Activated T-helper 1 cell treated with anti-CD3 and anti-CD28 coated beads, Interleukin-12 subunit alpha, Interleukin-12 subunit beta, Interleukin-2, Interleukin-4 antibody, amounts not matched to agents 30 ng/mL and 10 ng/mL and 1 ng/mL, durations not matched to agents 14 hours and 24 hours and 36 hours (primary cell): ENCODE measurements at regions of chr12 and their contacts with region 1.

Region 1: GRCh38 chr12:9049520-9050133 is 60.3 kb downstream of the KLRG1 start:
- DNase-seq: no peak
- H3K4me3 Mint-ChIP-seq: no peak overlapping the region
- H3K27ac Mint-ChIP-seq: no peak overlapping the region
- H3K4me1 Mint-ChIP-seq: no peaks in the 10 kb centered on the region
- H3K27me3 Mint-ChIP-seq: peaks cover 18% of the 10 kb centered on the region

Region 2: DNA sequence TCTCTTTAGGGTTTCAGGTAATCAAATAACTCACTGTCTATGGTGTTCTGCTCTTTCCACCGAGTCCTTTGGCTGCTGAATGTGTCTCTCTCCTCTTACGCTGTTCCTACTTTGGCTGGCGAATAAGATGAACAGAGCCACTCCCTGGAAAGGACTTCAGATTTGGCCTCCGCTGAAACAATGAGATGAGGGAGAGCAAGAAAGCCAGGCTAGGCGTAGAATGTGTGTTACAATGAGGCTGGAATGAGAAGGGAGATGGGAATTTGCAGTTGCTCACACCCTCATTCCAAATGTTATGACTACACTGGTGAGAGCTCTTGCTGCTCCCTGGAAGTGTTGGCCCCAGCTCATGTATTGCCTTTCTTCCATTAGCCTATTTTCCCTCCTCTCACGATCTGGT is 387.0 kb before region 1 on chr12 and contains the start of gene MFAP5:
- intact Hi-C with region 1: loop called (anchors 1 kb)
- DNase-seq: no peak
- H3K4me3 Mint-ChIP-seq: no peak within 1 kb of the TSS
- H3K27ac Mint-ChIP-seq: no peak within 1 kb of the TSS
- H3K4me1 Mint-ChIP-seq: no peaks in the 10 kb centered on the region
- H3K27me3 Mint-ChIP-seq: peaks cover 21% of the 10 kb centered on the region
- total RNA-seq, gene MFAP5: not detected in 2 replicates

Region 3: DNA sequence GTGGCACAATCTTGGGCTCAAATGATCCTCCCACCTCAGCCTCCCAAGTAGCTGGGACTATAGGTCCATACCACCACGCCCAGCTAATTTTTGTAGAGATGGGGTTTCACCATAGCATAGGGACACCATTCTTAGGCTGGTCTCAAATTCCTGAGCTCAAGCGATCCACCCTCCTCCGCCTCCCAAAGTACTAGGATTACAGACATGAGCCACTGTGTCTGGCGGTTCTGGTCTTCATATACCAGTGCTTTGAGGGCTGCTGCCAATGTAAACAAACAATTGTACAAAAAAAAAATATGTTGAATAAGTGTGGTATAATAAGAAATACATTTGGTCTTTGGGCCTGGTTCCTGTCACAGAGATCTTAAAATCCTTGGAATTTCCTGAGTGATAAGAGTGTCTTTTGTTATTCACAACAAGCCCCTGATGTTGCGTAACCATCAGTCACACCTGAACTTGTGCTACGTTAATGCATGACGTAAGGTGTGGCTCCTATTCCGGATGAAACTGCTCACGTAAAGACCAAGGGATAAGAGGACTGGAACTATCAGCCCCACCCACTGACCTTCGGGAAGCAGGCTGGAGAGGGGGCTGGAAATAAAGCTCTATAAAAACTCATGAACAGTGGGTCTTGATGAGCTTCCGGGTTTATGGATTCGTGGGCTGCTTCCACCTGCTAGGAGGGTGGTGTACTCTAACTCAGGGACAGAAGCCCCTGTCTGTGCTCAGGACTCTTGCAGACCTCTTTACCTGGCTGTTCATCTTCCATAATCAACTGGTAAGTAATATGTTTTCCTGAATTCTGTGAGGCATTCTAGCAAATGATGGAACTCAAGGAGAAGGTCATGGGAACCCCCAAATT is 368.4 kb before region 1 on chr12:
- intact Hi-C with region 1: loop called (anchors 1 kb)
- DNase-seq: no peak
- H3K4me3 Mint-ChIP-seq: no peak overlapping the region
- H3K27ac Mint-ChIP-seq: no peak overlapping the region
- H3K4me1 Mint-ChIP-seq: no peaks in the 10 kb centered on the region
- H3K27me3 Mint-ChIP-seq: peaks cover 12% of the 10 kb centered on the region

Region 4: GRCh38 chr12:8780389-8780788 is 269.2 kb before region 1 on chr12:
- intact Hi-C with region 1: loop called (anchors 1 kb)
- DNase-seq: no peak
- H3K4me3 Mint-ChIP-seq: no peak overlapping the region
- H3K27ac Mint-ChIP-seq: no peak overlapping the region
- H3K4me1 Mint-ChIP-seq: no peaks in the 10 kb centered on the region
- H3K27me3 Mint-ChIP-seq: no peaks in the 10 kb centered on the region